Activated T-helper 2 cell treated with anti-CD3 and anti-CD28 coated beads, Interferon-gamma antibody, Interleukin-2, Interleukin-4, amounts not matched to agents 10 μg/mL and 5 μg/mL and 100 μg/mL, durations not matched to agents 14 hours and 24 hours and 36 hours (primary cell): ENCODE measurements at regions of chr13 and their contacts with region 1.

Region 1: DNA sequence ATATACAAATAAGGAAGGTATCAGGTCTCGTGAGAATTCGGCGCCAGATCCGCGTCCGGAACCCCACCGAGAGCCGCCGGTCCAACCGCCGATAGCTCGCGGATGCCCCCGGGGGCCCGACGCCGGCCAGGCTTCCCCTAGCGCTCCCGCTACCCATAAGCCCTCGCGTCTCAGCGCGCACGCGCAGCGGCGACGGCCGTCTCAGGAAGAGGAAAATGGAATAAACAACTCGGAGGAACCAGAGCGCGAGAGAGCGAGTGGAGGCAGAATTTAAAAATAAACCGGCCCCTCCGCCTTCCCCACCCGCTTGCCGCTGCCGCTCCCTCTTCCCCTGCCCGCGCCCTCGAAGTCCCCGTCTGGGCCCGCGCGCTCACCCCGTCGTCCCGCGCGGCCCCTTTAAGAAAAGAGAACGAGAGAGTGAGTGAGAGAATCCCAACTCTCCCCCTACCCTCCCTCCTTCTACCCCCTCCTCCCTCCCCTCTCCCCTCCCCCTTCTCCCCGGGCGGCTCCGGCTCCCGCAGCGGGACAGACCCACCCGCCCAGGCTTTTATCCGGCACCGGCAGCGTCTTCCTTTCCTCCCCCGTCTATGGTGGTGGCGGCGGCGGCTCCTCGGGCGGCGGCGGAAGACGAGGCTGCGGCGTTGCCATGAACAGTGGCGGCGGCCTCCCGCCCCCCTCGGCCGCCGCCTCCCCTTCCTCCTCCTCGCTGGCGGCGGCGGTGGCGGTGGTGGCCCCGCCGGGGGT is at the start of gene PAN3:
- DNase-seq: peak; percentile 90
- H3K4me3 Mint-ChIP-seq: peak within 1 kb of the TSS; percentile 97
- H3K27ac Mint-ChIP-seq: peak within 1 kb of the TSS; percentile 98
- H3K4me1 Mint-ChIP-seq: peaks cover 38% of the 10 kb centered on the region
- H3K27me3 Mint-ChIP-seq: no peaks in the 10 kb centered on the region
- total RNA-seq, gene PAN3: 35.4 and 35.6 TPM in 2 replicates

Region 2: DNA sequence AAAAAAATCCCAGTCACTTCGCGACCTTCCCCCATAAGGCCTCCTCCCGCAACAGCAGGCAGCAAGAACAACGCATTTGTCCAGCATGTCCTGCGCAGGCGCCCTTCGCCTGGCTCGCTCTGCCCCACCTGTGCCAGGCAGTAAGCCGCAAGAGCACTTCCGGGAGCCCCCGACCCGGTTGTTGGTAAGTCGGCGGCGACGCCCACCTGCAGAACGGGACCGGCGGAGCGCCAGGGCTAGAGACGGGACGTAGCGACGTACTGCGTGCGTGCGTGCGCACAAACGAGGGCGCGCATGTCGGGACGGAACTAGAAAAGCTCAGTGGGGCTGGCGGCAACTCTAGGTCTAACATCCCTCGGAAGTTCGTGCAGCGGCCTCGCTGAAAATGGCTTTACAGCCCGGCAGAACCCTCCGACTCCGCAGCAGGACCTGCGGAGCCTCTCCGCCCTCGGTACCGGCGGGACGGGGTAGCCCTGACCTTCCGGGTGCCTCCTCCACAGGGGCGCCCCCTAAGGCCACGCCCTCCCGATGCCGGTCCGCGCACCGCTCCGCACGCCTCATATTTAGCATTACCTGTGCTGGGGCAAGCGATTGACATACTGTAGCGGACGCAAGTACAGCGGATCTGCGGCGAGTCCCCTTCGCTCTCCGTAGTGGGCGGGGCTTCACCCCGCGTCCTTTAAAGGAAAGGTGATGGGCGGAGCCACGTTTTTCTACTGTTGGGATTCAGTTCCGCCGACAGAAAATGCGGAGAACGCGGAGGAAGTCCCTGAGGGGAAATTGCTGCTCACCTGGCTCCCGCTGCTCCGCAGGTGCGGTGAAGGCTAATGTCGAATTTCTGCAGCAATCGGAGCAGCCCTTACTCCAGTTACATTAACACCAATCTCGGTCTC is 688.0 kb before region 1 on chr13 and contains the start of gene MTIF3:
- intact Hi-C with region 1: loop called (anchors 10 kb)
- DNase-seq: peak; percentile 96
- H3K4me3 Mint-ChIP-seq: peak within 1 kb of the TSS; percentile 92
- H3K27ac Mint-ChIP-seq: peak within 1 kb of the TSS; percentile 94
- H3K4me1 Mint-ChIP-seq: peaks cover 45% of the 10 kb centered on the region
- H3K27me3 Mint-ChIP-seq: no peaks in the 10 kb centered on the region
- total RNA-seq, gene MTIF3: 25.0 and 32.0 TPM in 2 replicates

Region 3: GRCh38 chr13:27810461-27810860 is 327.7 kb before region 1 on chr13:
- intact Hi-C with region 1: no loop called
- DNase-seq: no peak
- H3K4me3 Mint-ChIP-seq: no peak overlapping the region
- H3K27ac Mint-ChIP-seq: no peak overlapping the region
- H3K4me1 Mint-ChIP-seq: no peaks in the 10 kb centered on the region
- H3K27me3 Mint-ChIP-seq: peaks cover 20% of the 10 kb centered on the region

Region 4: DNA sequence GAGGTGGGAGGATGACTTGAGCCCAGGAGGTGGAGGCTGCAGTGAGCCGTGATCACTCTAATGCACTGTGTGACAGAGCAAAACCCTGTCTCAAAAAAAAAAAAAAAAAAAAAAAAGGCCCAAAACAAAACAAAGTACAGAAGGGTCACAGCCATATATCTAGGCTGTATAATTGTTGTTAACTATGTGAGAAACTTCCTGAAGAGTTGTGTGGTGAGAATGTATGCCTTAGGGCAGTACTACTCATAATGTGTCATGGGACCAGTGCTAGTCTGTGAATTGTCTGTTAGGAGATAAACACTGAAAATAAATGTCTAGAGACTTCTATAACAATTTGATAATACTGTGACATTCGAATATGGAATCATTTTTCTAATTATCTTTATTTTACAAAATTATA is 43.2 kb after region 1 on chr13:
- intact Hi-C with region 1: loop called (anchors 5 kb)
- DNase-seq: no peak
- H3K4me3 Mint-ChIP-seq: no peak overlapping the region
- H3K27ac Mint-ChIP-seq: no peak overlapping the region
- H3K4me1 Mint-ChIP-seq: peaks cover 6% of the 10 kb centered on the region
- H3K27me3 Mint-ChIP-seq: no peaks in the 10 kb centered on the region

Region 5: GRCh38 chr13:28268800-28269223 is 130.6 kb after region 1 on chr13:
- intact Hi-C with region 1: loop called (anchors 2 kb)
- DNase-seq: no peak
- H3K4me3 Mint-ChIP-seq: no peak overlapping the region
- H3K27ac Mint-ChIP-seq: no peak overlapping the region
- H3K4me1 Mint-ChIP-seq: peaks cover 23% of the 10 kb centered on the region
- H3K27me3 Mint-ChIP-seq: no peaks in the 10 kb centered on the region

Region 6: DNA sequence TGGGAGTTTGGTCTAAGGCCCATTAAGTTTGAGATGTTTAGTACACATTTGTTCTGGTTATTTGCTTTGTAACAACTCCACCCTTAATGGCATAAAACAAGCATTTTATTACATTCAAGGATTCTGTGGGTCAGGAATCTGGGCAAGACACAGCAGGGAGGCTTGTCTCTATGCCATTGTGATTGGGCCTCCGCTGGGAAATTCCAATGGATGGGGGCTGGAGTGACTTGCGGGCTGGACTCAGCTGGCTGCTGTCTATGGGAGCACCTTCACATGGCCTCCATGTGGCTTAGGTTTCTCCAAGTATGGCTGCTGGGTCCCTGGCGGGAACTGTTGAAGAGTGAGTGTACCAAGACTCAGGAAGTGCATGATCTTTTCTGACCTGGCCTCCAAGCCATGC is 159.2 kb after region 1 on chr13:
- intact Hi-C with region 1: no loop called
- DNase-seq: no peak
- H3K4me3 Mint-ChIP-seq: no peak overlapping the region
- H3K27ac Mint-ChIP-seq: no peak overlapping the region
- H3K4me1 Mint-ChIP-seq: peaks cover 12% of the 10 kb centered on the region
- H3K27me3 Mint-ChIP-seq: no peaks in the 10 kb centered on the region

Region 7: GRCh38 chr13:28574617-28575142 is 436.5 kb after region 1 on chr13:
- intact Hi-C with region 1: no loop called
- DNase-seq: no peak
- H3K4me3 Mint-ChIP-seq: no peak overlapping the region
- H3K27ac Mint-ChIP-seq: peak overlapping the region; percentile 82
- H3K4me1 Mint-ChIP-seq: peaks cover 16% of the 10 kb centered on the region
- H3K27me3 Mint-ChIP-seq: peaks cover 6% of the 10 kb centered on the region